HEK293 (cell line): ENCODE measurements at regions of chr7 and their contacts with region 1.

Region 1: GRCh38 chr7:106285051-106285854 is 470 bp upstream of the NAMPT start:
- H3K4me3 ChIP-seq: peak overlapping the region; percentile 86
- H3K27ac ChIP-seq: peak overlapping the region; percentile 82
- H3K4me1 ChIP-seq: peaks cover 5% of the 10 kb centered on the region; the same call in 1 of the 2 replicates
- CTCF ChIP-seq: no peak

Region 2: DNA sequence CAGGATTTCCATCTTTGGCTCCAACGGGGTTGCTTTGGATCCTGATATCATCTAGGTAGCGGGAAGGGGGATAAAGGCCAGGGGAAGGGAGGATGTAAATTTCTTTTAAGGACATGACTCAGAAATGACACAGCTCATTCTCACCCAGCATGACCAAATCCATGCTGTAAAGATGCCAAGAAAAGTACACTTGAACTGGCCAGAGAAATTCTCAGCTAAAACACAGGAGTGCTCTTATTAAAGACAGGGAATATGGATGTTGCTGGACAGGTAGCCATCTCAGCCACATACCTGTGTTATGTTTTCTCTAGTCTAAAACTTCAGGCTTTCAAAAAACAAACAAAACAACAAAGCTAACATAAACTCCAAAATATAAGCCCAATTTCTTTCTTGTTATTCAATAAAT is 68.7 kb before region 1 on chr7:
- CTCF ChIA-PET with region 1: no interaction called
- POLR2A ChIA-PET with region 1: interaction called, 15 read pairs
- H3K4me3 ChIP-seq: no peak overlapping the region
- H3K27ac ChIP-seq: no peak overlapping the region
- H3K4me1 ChIP-seq: 0 out of 2 replicates have a peak, but pooled peaks cover 3% of the 10 kb centered on the region
- CTCF ChIP-seq: no peak

Region 3: DNA sequence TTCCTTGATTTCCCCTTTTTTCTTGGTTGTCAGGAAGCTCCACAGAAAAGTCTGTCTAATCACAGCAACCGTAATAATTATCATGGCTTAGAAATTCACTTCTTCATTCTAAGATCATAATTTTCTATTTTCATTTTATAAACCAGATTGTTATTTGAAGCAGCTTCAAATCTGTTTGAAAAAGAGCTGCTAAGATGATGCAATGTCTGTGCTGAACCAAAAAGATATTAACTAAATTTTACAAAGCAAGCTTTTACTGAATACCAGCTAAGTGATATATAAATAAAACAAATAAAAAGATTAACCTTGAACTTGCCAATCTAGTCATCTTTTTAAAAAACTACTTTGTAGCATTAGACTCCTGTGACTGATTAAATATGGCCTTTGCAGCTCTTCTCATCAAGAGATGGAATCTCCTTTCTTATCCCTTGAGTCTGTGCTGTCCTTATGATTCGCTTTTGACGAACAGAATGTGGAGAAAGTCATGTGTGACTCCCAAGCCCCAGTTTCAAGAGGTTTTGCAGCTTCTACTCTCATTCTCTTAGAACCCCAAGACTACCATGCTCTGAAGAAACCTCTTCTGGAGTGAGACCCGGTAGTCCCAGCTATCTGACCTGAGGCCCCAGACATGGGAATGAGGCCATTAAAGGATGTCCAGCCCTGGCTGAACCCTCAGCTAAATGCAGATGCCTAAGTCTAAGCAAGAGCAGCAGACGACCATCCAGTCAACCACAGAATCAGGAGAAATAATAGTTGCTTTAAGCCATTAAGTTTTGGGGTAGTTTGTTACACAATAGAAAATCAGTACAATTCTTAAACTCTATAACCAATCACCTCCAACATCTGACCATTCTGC is 14.9 kb before region 1 on chr7:
- CTCF ChIA-PET with region 1: no interaction called
- POLR2A ChIA-PET with region 1: interaction called, 13 read pairs
- H3K4me3 ChIP-seq: no peak overlapping the region
- H3K27ac ChIP-seq: no peak overlapping the region
- H3K4me1 ChIP-seq: no peaks in the 10 kb centered on the region
- CTCF ChIP-seq: no peak